HepG2 (cell line): ENCODE measurements at regions of chr21 and their contacts with region 1.

Region 1: DNA sequence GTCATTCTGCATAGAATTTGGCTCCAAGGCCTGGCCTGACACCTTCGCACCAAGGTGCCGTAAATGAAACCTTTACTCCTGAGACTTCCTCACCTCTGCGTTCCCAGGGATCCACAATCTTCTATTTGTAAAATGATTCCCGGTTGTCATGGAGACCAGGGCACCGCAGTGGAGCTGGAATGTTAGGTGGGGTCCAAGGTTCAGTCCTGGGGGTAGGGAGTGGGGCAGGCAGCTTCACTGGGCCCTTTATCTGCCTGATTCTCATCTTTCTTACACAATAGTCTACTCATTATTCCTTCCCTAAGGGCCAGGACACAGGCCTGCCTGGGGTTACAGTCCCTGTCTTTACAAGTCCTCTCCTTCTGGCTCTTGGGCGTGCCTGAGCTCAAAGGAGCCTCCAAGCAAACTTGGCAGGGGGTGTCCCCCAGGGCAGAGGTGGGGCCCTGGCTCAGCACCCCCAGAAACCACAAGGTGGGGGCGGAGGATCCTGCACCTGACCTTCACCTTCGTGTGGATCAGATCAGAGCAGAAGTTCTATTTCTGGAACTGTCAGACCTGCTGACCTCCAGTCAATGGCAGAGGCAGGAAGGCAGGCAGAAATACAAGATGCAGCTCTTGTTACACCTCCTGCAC is 51.1 kb downstream of the RIPK4 start:
- DNase-seq: peak; percentile 98
- ATAC-seq: peak; percentile 87
- H3K4me3 ChIP-seq: peak overlapping the region; percentile 27 to 73 (median 42); a peak in 5 of 6 replicates
- H3K27ac ChIP-seq: peak overlapping the region; percentile 98
- H3K4me1 ChIP-seq: peaks cover 89% of the 10 kb centered on the region
- H3K27me3 ChIP-seq: no peaks in the 10 kb centered on the region
- CTCF ChIP-seq: no peak
- EP300 ChIP-seq: peak; percentile 91 to 98
- POLR2A ChIP-seq: peak in 1 of 2 experiments; percentile 62; a peak in 2 of 4 replicates
- RAD21 ChIP-seq: peak; percentile 47; the same call in 1 of the 2 replicates

Region 2: GRCh38 chr21:41678944-41679343 is 36.8 kb before region 1 on chr21:
- CTCF ChIA-PET with region 1: no interaction called
- POLR2A ChIA-PET with region 1: interaction called, 55 read pairs
- in situ Hi-C with region 1: no loop called
- intact Hi-C with region 1: loop called (anchors 2 kb)
- DNase-seq: peak; percentile 98
- ATAC-seq: peak; percentile 93
- H3K4me3 ChIP-seq: peak overlapping the region; percentile 38 to 70 (median 40); a peak in 5 of 6 replicates
- H3K27ac ChIP-seq: peak overlapping the region; percentile 69
- H3K4me1 ChIP-seq: peaks cover 51% of the 10 kb centered on the region
- H3K27me3 ChIP-seq: peaks cover 2 to 28% of the 10 kb centered on the region in 2 experiments; a peak in 4 of 5 replicates
- CTCF ChIP-seq: no peak
- EP300 ChIP-seq: no peak
- POLR2A ChIP-seq: peak; percentile 17 to 45; a peak in 1 of 4 replicates
- RAD21 ChIP-seq: no peak

Region 3: GRCh38 chr21:41684381-41685245 is 31.2 kb before region 1 on chr21:
- CTCF ChIA-PET with region 1: no interaction called
- POLR2A ChIA-PET with region 1: interaction called, 55 read pairs
- in situ Hi-C with region 1: no loop called
- intact Hi-C with region 1: loop called (anchors 2 kb)
- DNase-seq: peak; percentile 24
- ATAC-seq: peak; percentile 7; the same call in 1 of the 3 replicates
- H3K4me3 ChIP-seq: peak overlapping the region in 2 of 3 experiments; percentile 18 to 24; a peak in 2 of 6 replicates
- H3K27ac ChIP-seq: no peak overlapping the region
- H3K4me1 ChIP-seq: peaks cover 79% of the 10 kb centered on the region
- H3K27me3 ChIP-seq: peaks cover 4 to 32% of the 10 kb centered on the region in 2 experiments; a peak in 3 of 5 replicates
- CTCF ChIP-seq: no peak
- EP300 ChIP-seq: no peak
- POLR2A ChIP-seq: no peak
- RAD21 ChIP-seq: no peak

Region 4: GRCh38 chr21:41726945-41727783 is 11.4 kb after region 1 on chr21:
- CTCF ChIA-PET with region 1: no interaction called
- POLR2A ChIA-PET with region 1: interaction called, 31 read pairs
- in situ Hi-C with region 1: no loop called
- intact Hi-C with region 1: no loop called
- DNase-seq: peak; percentile 48
- ATAC-seq: peak; percentile 86
- H3K4me3 ChIP-seq: peak overlapping the region; percentile 28 to 67 (median 41); a peak in 5 of 6 replicates
- H3K27ac ChIP-seq: no peak overlapping the region
- H3K4me1 ChIP-seq: peaks cover 44% of the 10 kb centered on the region
- H3K27me3 ChIP-seq: peaks cover 2 to 10% of the 10 kb centered on the region in 2 experiments; a peak in 2 of 5 replicates
- CTCF ChIP-seq: peak; percentile 59
- EP300 ChIP-seq: no peak
- POLR2A ChIP-seq: no peak; a peak in 1 of 4 replicates
- RAD21 ChIP-seq: peak; percentile 51; the same call in 1 of the 2 replicates

Region 5: DNA sequence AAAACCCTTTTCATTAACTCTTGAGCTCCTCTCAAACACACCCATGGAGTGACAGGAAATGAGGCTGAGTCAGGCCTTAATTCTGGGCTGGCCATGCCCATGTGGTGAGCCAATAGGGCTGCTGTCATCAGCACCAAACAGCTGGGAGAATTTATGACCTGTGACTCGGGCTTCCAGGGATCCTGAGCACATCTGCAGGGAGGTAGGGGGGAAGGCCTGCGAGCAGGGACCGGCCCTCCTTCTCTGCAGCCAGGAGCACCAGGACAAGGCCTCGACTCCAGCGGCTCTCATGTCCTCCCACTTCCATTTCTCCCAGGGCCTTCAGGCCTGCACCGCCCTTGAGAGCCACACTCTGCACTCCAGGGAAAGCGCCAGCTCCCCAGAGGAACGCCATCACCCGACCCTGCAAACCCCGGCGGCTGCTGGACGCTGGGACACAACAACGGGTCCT is 36.5 kb after region 1 on chr21:
- CTCF ChIA-PET with region 1: no interaction called
- POLR2A ChIA-PET with region 1: interaction called, 19 read pairs
- in situ Hi-C with region 1: no loop called
- intact Hi-C with region 1: no loop called
- DNase-seq: no peak
- ATAC-seq: no peak; the same call in 2 of the 3 replicates
- H3K4me3 ChIP-seq: peak overlapping the region in 1 of 3 experiments; percentile 5; a peak in 1 of 6 replicates
- H3K27ac ChIP-seq: peak overlapping the region; percentile 45
- H3K4me1 ChIP-seq: peaks cover 45% of the 10 kb centered on the region
- H3K27me3 ChIP-seq: no peaks in the 10 kb centered on the region
- CTCF ChIP-seq: no peak
- EP300 ChIP-seq: no peak
- POLR2A ChIP-seq: no peak
- RAD21 ChIP-seq: no peak

Region 6: DNA sequence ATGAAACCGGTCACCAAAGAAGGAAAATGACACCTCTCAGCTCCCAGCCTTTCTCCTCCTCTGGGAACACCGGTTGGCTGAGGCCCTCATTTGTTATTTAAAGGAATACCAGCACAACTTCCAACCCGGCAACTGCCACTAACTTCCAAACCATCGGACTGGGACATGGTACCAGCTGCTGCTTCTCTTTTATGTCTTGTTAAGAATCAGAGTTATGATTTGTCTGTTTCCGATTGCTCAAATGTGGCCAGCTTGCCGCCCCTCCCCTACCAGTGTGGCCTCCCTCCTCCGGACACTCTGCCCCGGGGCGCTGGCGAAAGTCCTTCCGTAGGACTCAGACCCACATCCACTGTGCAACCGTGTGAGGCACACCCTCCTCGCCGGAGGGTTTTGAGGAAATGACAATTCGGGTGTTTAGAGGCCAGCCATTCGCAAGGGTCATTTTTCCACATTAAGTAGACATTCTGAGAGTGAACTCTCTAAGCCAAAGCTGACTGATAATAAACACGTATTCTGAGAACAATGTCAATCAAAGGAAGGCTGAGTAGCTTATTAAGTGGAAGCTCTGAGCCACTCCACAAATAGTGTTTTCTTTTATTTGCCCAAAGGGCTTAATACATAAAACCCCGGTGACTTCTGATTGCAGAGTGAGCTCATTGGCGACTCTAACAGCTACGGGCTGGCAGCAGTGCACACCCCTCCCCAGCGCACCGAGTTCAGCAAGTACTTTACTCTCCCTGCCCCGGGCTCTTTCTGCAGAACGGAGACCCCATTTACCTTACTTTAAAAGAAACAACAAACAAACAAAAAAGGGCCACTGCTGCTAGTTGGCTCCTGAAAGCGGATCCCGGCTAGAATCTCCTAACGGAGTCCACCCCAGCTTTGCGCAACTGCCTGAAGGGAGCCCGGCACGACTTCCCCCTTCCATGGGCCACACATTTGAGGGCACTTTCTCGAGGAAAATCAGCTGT is 45.7 kb after region 1 on chr21:
- CTCF ChIA-PET with region 1: no interaction called
- POLR2A ChIA-PET with region 1: interaction called, 106 read pairs
- in situ Hi-C with region 1: loop called (anchors 5 kb)
- intact Hi-C with region 1: no loop called
- DNase-seq: peak; percentile 38
- ATAC-seq: peak; percentile 42
- H3K4me3 ChIP-seq: peak overlapping the region; percentile 45 to 62 (median 46); a peak in 5 of 6 replicates
- H3K27ac ChIP-seq: peak overlapping the region; percentile 7
- H3K4me1 ChIP-seq: peaks cover 74% of the 10 kb centered on the region
- H3K27me3 ChIP-seq: no peaks in the 10 kb centered on the region; a peak in 1 of 5 replicates
- CTCF ChIP-seq: no peak
- EP300 ChIP-seq: no peak
- POLR2A ChIP-seq: no peak
- RAD21 ChIP-seq: no peak

Region 7: DNA sequence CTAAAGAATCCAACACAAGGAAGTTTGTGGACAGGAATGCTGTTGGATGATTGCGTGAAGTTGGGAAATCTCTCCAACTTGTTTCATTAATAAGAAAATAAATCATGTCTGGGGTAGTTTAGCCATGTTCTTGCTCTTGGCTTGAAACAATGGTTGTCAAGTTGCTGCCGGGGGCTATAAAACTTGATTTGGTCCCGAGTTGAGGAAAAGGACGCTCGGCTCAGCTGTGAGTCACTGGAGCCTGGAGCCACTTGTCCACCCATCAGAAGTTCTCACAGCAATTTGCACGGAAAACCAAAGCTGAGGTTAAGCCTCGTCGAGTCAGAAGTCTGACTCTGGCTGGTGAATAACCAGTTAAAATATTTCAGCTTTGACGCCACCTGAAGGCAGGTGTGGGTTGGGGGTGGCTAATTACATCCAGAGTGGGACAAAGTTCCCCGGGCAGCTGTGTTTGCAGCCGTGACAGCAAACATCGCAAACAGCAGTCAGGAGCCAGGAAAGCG is 70.8 kb after region 1 on chr21:
- CTCF ChIA-PET with region 1: no interaction called
- POLR2A ChIA-PET with region 1: no interaction called
- in situ Hi-C with region 1: no loop called
- intact Hi-C with region 1: no loop called
- DNase-seq: no peak
- ATAC-seq: peak; percentile 64
- H3K4me3 ChIP-seq: peak overlapping the region in 1 of 3 experiments; percentile 28; a peak in 1 of 6 replicates
- H3K27ac ChIP-seq: no peak overlapping the region
- H3K4me1 ChIP-seq: peaks cover 39% of the 10 kb centered on the region
- H3K27me3 ChIP-seq: peaks cover 1 to 3% of the 10 kb centered on the region in 2 experiments; a peak in 3 of 5 replicates
- CTCF ChIP-seq: peak; percentile 37
- EP300 ChIP-seq: no peak
- POLR2A ChIP-seq: no peak
- RAD21 ChIP-seq: no peak